OCI-LY7 (cell line): ENCODE measurements at regions of chr12 and their contacts with region 1.

Region 1: DNA sequence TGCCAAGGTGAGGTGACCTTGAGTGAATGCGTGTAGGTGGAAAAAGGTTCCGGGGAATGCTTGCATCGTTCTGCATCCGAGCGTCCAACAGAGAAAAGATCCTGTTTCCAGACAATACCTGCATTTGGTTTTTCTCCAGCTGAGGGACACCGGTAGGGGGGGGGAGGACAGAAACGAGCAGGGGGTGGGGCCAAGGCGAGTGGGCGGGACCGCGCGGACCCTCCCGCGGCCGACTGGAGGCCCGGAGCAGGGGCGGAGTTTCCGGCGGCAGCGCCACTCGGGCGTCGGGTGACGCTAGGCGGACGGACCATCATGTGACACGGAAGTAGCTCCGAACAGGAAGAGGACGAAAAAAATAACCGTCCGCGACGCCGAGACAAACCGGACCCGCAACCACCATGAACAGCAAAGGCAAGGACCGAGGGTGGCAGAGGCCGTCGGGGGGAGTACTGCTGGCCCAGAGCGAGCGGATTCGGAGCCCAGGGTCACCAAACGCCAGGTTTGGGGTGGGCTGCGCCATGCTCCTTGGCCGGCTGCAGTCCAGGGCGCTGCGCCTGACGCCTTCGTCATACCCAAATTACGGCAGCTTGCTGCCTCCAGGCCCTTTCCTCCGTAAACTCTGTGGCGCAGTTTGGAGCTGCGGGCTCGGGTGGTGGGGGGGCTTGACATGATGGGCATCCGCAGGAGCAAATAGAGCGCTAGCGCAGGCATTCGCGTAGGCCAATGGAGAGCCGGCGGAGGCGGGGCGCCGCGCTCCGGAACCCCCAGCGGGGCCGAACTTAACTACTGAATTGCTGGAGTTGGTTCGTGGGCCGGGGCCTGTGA is at the start of gene DAZAP2:
- DNase-seq: peak; percentile 98
- H3K4me3 ChIP-seq: peak within 1 kb of the TSS; percentile 95
- H3K27ac ChIP-seq: peak within 1 kb of the TSS; percentile 94
- H3K4me1 ChIP-seq: peaks cover 16% of the 10 kb centered on the region
- CTCF ChIP-seq: no peak
- total RNA-seq, gene DAZAP2: 101 and 137 TPM in 2 replicates

Region 2: DNA sequence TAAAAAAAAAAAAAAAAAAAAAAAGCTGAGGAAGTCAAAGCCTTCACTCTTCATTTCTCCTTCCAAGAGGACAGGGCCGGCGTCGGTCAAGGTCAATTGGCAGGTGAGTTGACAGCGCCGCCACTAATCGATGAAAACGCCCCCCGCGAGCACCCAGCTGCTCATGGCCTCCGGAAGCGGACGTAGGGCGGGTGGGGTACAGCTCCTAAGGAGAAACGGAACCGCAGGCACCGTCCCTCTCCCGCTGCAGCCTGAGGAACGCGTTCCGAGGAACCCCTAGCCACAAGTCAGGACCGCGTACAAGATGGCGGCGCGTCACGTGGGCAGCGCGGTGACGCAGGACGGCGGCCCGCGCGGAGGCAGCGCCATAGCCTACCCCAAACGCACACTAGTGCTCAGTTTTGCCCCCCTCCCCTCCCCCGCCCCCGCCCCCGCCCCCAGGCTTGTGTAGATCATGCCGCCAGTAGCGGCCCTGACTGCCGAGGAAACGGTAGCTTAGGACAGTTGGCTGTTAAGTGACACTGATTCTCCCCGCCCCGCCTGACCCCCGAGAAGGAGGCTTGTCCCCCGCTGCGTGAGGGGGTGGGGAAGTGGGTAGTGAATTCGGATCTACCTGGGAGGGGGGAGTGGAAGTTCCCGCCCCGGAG is 475.0 kb before region 1 on chr12 and contains the start of gene ATF1:
- CTCF ChIA-PET with region 1: no interaction called
- POLR2A ChIA-PET with region 1: no interaction called
- intact Hi-C with region 1: loop called (anchors 10 kb)
- DNase-seq: peak; percentile 94
- H3K4me3 ChIP-seq: peak within 1 kb of the TSS; percentile 82
- H3K27ac ChIP-seq: peak within 1 kb of the TSS; percentile 84
- H3K4me1 ChIP-seq: peaks cover 32% of the 10 kb centered on the region
- CTCF ChIP-seq: no peak
- total RNA-seq, gene ATF1: 47.4 and 83.3 TPM in 2 replicates

Region 3: GRCh38 chr12:50924439-50925341 is 314.0 kb before region 1 on chr12:
- CTCF ChIA-PET with region 1: no interaction called
- POLR2A ChIA-PET with region 1: interaction called, 3 read pairs
- intact Hi-C with region 1: loop called (anchors 2 kb)
- DNase-seq: peak; percentile 96
- H3K4me3 ChIP-seq: peak overlapping the region; percentile 82
- H3K27ac ChIP-seq: peak overlapping the region; percentile 99
- H3K4me1 ChIP-seq: peaks cover 65% of the 10 kb centered on the region
- CTCF ChIP-seq: no peak

Region 4: GRCh38 chr12:51025836-51026638 is 212.7 kb before region 1 on chr12 and contains the start of gene SLC11A2:
- CTCF ChIA-PET with region 1: no interaction called
- POLR2A ChIA-PET with region 1: interaction called, 3 read pairs
- intact Hi-C with region 1: loop called (anchors 5 kb)
- DNase-seq: peak; percentile 94
- H3K4me3 ChIP-seq: peak within 1 kb of the TSS; percentile 90
- H3K27ac ChIP-seq: peak within 1 kb of the TSS; percentile 33
- H3K4me1 ChIP-seq: peaks cover 40% of the 10 kb centered on the region
- CTCF ChIP-seq: no peak
- total RNA-seq, gene SLC11A2: 28.2 and 35.0 TPM in 2 replicates

Region 5: DNA sequence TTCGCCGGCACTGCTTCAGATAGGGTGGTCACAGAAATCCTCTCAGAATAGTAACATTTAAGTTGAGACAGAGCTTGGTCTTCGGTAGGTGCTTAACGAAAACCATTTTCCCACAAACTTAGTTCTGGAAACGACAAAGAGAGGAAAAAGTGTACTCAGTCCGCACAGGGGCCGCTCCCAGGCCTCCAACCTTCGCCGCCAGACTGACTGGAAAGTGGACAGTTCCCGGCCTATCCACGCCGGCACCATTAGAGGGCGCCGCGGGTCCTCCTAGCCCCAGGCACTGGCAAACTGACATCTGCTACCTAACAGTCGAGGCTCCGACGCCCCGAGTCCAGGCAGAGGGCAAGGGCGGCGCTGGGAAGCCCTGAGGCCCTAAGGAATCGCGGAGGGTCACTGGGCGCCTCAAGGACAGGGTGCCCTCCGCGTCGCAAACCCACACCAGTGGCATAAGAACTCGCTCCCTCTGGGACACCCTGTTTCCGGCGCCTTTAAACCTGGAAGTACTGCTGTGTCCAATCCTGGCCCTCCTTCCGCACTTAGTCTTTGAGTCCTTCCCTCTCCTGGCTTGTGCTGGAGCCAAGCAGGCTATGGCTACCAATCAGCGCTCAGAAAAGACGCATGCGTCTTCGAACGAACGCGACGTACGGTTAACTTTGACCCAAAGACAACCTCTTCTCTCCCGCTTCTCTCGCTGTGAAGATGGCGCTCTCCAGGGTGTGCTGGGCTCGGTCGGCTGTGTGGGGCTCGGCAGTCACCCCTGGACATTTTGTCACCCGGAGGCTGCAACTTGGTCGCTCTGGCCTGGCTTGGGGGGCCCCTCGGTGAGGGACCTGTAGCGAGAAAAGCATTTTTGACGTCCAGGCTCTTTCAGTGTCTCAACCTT is 190.8 kb before region 1 on chr12 and contains the start of gene LETMD1:
- CTCF ChIA-PET with region 1: no interaction called
- POLR2A ChIA-PET with region 1: no interaction called
- intact Hi-C with region 1: loop called (anchors 2 kb)
- DNase-seq: peak; percentile 98
- H3K4me3 ChIP-seq: peak within 1 kb of the TSS; percentile 83
- H3K27ac ChIP-seq: peak within 1 kb of the TSS; percentile 64
- H3K4me1 ChIP-seq: peaks cover 17% of the 10 kb centered on the region
- CTCF ChIP-seq: peak; percentile 96
- total RNA-seq, gene LETMD1: 53.9 and 58.6 TPM in 2 replicates

Region 6: GRCh38 chr12:51217968-51218606 is 20.6 kb before region 1 on chr12 and contains the start of gene POU6F1:
- CTCF ChIA-PET with region 1: interaction called, 8 read pairs
- POLR2A ChIA-PET with region 1: interaction called, 18 read pairs
- intact Hi-C with region 1: loop called (anchors 1 kb)
- DNase-seq: peak; percentile 83
- H3K4me3 ChIP-seq: peak within 1 kb of the TSS; percentile 69
- H3K27ac ChIP-seq: peak within 1 kb of the TSS; percentile 40
- H3K4me1 ChIP-seq: peaks cover 21% of the 10 kb centered on the region
- CTCF ChIP-seq: peak; percentile 61
- total RNA-seq, gene POU6F1: 1.2 and 2.6 TPM in 2 replicates

Region 7: GRCh38 chr12:51323991-51324930 is 85.5 kb after region 1 on chr12 and contains the start of gene BIN2:
- CTCF ChIA-PET with region 1: no interaction called
- POLR2A ChIA-PET with region 1: interaction called, 3 read pairs
- intact Hi-C with region 1: loop called (anchors 1 kb)
- DNase-seq: peak; percentile 87
- H3K4me3 ChIP-seq: peak within 1 kb of the TSS; percentile 67
- H3K27ac ChIP-seq: peak within 1 kb of the TSS; percentile 24
- H3K4me1 ChIP-seq: peaks cover 80% of the 10 kb centered on the region
- CTCF ChIP-seq: no peak
- total RNA-seq, gene BIN2: 0.31 and 0.88 TPM in 2 replicates

Region 8: GRCh38 chr12:51678086-51678724 is 439.5 kb after region 1 on chr12:
- CTCF ChIA-PET with region 1: no interaction called
- POLR2A ChIA-PET with region 1: no interaction called
- intact Hi-C with region 1: no loop called
- DNase-seq: peak; percentile 40
- H3K4me3 ChIP-seq: no peak overlapping the region
- H3K27ac ChIP-seq: no peak overlapping the region
- H3K4me1 ChIP-seq: no peaks in the 10 kb centered on the region
- CTCF ChIP-seq: peak; percentile 79